ENCODE measurements at regions of chr1 and their contacts with region 1.

Region 1: GRCh38 chr1:182568647-182569284 is 20.3 kb downstream of the RNASEL start:
- DNase-seq: no peak
- H3K4me3 ChIP-seq: no peak overlapping the region
- H3K27ac ChIP-seq: no peak overlapping the region
- H3K4me1 ChIP-seq: no peaks in the 10 kb centered on the region
- H3K27me3 ChIP-seq: no peaks in the 10 kb centered on the region
- CTCF ChIP-seq: no peak
- POLR2A ChIP-seq: no peak

Region 2: DNA sequence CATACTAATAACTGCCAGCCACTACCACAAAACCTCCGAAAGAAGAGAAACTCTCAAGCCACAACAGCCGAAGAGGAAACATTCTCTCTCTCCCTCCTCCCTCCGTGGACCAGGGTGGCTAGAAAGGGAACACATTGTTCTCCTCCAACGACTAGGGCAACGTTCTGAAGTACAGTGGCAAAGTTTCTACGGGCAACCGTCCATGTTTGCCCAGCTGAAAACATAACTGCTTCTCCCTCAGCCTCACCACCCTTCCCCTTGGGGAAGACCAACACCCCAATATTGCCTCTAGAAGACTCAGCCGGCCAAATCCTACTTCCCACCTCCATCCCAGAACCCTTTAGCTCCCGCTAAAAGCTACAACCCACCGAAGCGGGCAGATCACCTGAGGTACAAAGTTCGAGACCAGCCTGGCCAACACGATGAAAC is 179.1 kb before region 1 on chr1:
- intact Hi-C with region 1: no loop called
- DNase-seq: peak; percentile 78 to 86
- H3K4me3 ChIP-seq: peak overlapping the region; percentile 49 to 81 (median 80)
- H3K27ac ChIP-seq: peak overlapping the region; percentile 99 to 100 (median 100)
- H3K4me1 ChIP-seq: peaks cover 40 to 42% of the 10 kb centered on the region in 2 donors
- H3K27me3 ChIP-seq: no peaks in the 10 kb centered on the region
- CTCF ChIP-seq: no peak
- POLR2A ChIP-seq: peak in 1 of 2 donors; percentile 71

Region 3: GRCh38 chr1:182453626-182454025 is 115.1 kb before region 1 on chr1:
- intact Hi-C with region 1: loop called (anchors 10 kb)
- DNase-seq: no peak
- H3K4me3 ChIP-seq: no peak overlapping the region
- H3K27ac ChIP-seq: no peak overlapping the region
- H3K4me1 ChIP-seq: no peaks in the 10 kb centered on the region
- H3K27me3 ChIP-seq: no peaks in the 10 kb centered on the region
- CTCF ChIP-seq: no peak
- POLR2A ChIP-seq: no peak